Endothelial cell of umbilical vein (primary cell): ENCODE measurements at regions of chr5 and their contacts with region 1.

Region 1: GRCh38 chr5:61362796-61363368 is 30.8 kb downstream of the ZSWIM6 start:
- DNase-seq: no peak
- H3K4me3 ChIP-seq: no peak overlapping the region
- H3K27ac ChIP-seq: no peak overlapping the region
- H3K4me1 ChIP-seq: peaks cover 3% of the 10 kb centered on the region
- H3K27me3 ChIP-seq: no peaks in the 10 kb centered on the region
- CTCF ChIP-seq: peak in 1 of 2 donors; percentile 19
- POLR2A ChIP-seq: no peak

Region 2: DNA sequence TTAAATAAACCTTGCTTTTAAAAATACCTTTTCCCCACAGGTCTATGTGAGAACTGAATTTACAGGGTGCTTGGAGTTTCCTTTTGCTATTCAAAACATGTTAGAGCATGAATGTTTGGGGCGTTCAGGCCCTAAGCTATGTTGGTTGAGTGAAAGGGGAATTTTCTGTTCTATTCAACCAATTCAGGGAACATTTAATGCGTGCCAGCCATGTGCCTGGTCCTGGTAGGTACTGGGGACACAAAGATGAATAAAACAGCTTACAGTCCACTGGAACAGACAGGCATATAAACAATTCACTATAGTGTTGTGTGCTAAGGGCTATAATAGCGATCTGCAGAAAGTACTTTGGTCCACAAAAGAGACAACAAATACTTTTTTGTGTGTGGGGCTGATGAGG is 77.7 kb after region 1 on chr5:
- CTCF ChIA-PET with region 1: no interaction called
- POLR2A ChIA-PET with region 1: no interaction called
- dilution Hi-C with region 1: no loop called
- intact Hi-C with region 1: no loop called
- DNase-seq: no peak
- H3K4me3 ChIP-seq: no peak overlapping the region
- H3K27ac ChIP-seq: no peak overlapping the region
- H3K4me1 ChIP-seq: no peaks in the 10 kb centered on the region
- H3K27me3 ChIP-seq: no peaks in the 10 kb centered on the region
- CTCF ChIP-seq: no peak
- POLR2A ChIP-seq: no peak

Region 3: GRCh38 chr5:61625681-61626621 is 263.1 kb after region 1 on chr5:
- CTCF ChIA-PET with region 1: no interaction called
- POLR2A ChIA-PET with region 1: no interaction called
- dilution Hi-C with region 1: no loop called
- intact Hi-C with region 1: loop called (anchors 1 kb)
- DNase-seq: peak; percentile 51
- H3K4me3 ChIP-seq: peak overlapping the region; percentile 58 to 72 (median 71)
- H3K27ac ChIP-seq: peak overlapping the region; percentile 45
- H3K4me1 ChIP-seq: peaks cover 10% of the 10 kb centered on the region
- H3K27me3 ChIP-seq: no peaks in the 10 kb centered on the region
- CTCF ChIP-seq: no peak
- POLR2A ChIP-seq: no peak